ENCODE measurements at regions of chr20 and their contacts with region 1.

Region 1: DNA sequence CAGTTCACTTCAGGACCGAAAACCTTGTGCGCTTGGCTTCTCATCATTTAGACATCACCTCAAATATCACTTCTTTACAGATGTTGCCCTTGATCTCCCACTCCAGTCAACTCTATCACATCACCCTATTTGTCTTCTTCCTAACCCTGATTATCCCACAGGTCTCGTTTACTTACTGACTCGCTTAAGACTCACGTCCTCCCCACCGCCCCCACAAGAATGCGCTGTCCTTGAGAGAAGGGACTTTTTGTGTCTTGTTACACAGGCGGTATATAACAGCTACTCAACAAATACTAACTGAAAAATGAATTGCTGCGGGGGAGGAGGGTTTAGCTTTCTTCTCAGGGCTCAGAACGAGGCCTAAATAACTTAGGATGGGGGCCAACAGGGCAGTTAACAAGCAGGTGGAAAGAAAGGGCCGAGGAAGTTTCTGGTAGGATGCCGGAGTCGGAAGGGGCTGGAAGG is 527 bp downstream of the TOMM34 start:
- DNase-seq: peak; percentile 45 to 82
- ATAC-seq: peak; percentile 69 to 85 (median 71)
- H3K4me3 ChIP-seq: peak overlapping the region; percentile 85
- H3K4me3 Mint-ChIP-seq: peak overlapping the region; percentile 99
- H3K27ac ChIP-seq: peak overlapping the region; percentile 61
- H3K27ac Mint-ChIP-seq: peak overlapping the region; percentile 82 to 88
- H3K4me1 ChIP-seq: peaks cover 13% of the 10 kb centered on the region
- H3K4me1 Mint-ChIP-seq: peaks cover 31 to 35% of the 10 kb centered on the region in 2 donors
- H3K27me3 ChIP-seq: no peaks in the 10 kb centered on the region
- H3K27me3 Mint-ChIP-seq: no peaks in the 10 kb centered on the region
- CTCF ChIP-seq: peak; percentile 22

Region 2: DNA sequence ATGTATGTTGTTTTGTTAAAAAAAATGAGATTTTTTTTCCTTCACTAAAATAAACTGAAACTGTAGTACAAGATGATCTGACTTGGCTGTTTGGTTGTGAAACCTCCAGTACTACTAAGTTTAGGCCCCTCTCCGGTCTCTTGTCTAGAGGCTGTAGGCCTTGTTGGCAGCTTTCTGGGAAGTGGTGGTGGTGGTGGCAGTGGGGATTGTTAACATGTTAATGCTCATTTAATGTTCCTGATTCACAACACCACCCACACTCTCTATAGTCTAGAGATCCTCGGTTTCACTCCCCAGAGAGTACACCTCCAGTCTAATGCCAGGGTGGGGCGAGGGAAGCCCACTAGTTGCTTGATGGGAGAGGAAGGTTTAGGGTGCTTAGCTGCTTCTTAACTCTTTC is 30.8 kb after region 1 on chr20:
- intact Hi-C with region 1: loop called (anchors 5 kb)
- DNase-seq: peak in 1 of 2 donors; percentile 43
- ATAC-seq: peak; percentile 34 to 54 (median 50)
- H3K4me3 ChIP-seq: no peak overlapping the region
- H3K4me3 Mint-ChIP-seq: peak overlapping the region; percentile 93
- H3K27ac ChIP-seq: peak overlapping the region; percentile 79
- H3K27ac Mint-ChIP-seq: peak overlapping the region; percentile 66 to 97
- H3K4me1 ChIP-seq: peaks cover 29% of the 10 kb centered on the region
- H3K4me1 Mint-ChIP-seq: peaks cover 60 to 64% of the 10 kb centered on the region in 2 donors
- H3K27me3 ChIP-seq: no peaks in the 10 kb centered on the region
- H3K27me3 Mint-ChIP-seq: no peaks in the 10 kb centered on the region
- CTCF ChIP-seq: no peak

Region 3: DNA sequence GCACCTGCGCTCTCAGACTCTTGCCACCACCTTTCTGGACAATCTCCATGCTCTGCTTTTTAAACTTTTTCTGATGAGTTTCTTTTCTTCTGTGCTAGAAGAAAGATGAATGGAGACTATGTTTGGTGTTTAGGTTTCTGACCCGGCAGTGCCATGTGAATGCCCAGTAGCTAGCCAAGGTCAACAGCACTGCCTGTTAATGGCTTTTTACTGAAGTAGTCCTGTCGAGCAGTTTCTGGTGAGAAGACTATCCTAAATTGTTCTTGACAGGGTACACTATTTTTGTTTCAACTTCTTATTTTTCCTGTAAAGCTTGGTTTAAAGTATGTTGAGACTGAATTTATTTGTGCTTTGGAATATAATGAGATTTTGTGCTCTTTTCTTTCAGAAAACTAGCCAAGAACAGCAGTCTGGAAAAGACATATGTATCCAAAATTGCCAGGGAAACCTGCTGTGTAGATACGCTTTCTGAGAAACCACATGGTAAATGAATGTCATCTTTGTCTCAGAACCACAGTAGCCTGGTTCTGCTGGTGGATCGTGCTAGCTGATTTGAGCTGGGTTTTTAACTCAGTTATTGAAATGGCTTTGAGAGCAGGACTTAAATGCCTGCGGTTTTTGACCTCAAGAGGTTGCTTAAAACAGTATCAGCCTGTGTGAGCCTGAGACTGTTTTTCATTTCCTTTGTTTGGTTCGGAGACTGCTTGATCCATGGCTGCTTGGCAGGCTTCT is 93.2 kb after region 1 on chr20:
- intact Hi-C with region 1: no loop called
- DNase-seq: peak in 1 of 2 donors; percentile 58
- ATAC-seq: peak; percentile 69 to 81 (median 75)
- H3K4me3 ChIP-seq: no peak overlapping the region
- H3K4me3 Mint-ChIP-seq: peak overlapping the region; percentile 74
- H3K27ac ChIP-seq: peak overlapping the region; percentile 40
- H3K27ac Mint-ChIP-seq: peak overlapping the region; percentile 83 to 84
- H3K4me1 ChIP-seq: peaks cover 29% of the 10 kb centered on the region
- H3K4me1 Mint-ChIP-seq: peaks cover 83 to 84% of the 10 kb centered on the region in 2 donors
- H3K27me3 ChIP-seq: no peaks in the 10 kb centered on the region
- H3K27me3 Mint-ChIP-seq: no peaks in the 10 kb centered on the region
- CTCF ChIP-seq: no peak

Region 4: GRCh38 chr20:45095753-45096371 is 136.2 kb after region 1 on chr20:
- intact Hi-C with region 1: loop called (anchors 5 kb)
- DNase-seq: peak; percentile 30 to 84
- ATAC-seq: peak; percentile 59 to 75 (median 63)
- H3K4me3 ChIP-seq: no peak overlapping the region
- H3K4me3 Mint-ChIP-seq: no peak overlapping the region
- H3K27ac ChIP-seq: no peak overlapping the region
- H3K27ac Mint-ChIP-seq: no peak overlapping the region
- H3K4me1 ChIP-seq: peaks cover 4% of the 10 kb centered on the region
- H3K4me1 Mint-ChIP-seq: peaks cover 0 to 10% of the 10 kb centered on the region in 2 donors
- H3K27me3 ChIP-seq: peaks cover 18% of the 10 kb centered on the region
- H3K27me3 Mint-ChIP-seq: peaks cover 21% of the 10 kb centered on the region in 2 donors
- CTCF ChIP-seq: peak; percentile 68